Left ventricle myocardium superior (tissue), 1 donor: ENCODE measurements at regions of chr13 and their contacts with region 1.

Region 1: GRCh38 chr13:110412132-110412914 is 105.2 kb downstream of the COL4A2 start:
- DNase-seq: peak; percentile 88
- ATAC-seq: peak; percentile 78

Region 2: DNA sequence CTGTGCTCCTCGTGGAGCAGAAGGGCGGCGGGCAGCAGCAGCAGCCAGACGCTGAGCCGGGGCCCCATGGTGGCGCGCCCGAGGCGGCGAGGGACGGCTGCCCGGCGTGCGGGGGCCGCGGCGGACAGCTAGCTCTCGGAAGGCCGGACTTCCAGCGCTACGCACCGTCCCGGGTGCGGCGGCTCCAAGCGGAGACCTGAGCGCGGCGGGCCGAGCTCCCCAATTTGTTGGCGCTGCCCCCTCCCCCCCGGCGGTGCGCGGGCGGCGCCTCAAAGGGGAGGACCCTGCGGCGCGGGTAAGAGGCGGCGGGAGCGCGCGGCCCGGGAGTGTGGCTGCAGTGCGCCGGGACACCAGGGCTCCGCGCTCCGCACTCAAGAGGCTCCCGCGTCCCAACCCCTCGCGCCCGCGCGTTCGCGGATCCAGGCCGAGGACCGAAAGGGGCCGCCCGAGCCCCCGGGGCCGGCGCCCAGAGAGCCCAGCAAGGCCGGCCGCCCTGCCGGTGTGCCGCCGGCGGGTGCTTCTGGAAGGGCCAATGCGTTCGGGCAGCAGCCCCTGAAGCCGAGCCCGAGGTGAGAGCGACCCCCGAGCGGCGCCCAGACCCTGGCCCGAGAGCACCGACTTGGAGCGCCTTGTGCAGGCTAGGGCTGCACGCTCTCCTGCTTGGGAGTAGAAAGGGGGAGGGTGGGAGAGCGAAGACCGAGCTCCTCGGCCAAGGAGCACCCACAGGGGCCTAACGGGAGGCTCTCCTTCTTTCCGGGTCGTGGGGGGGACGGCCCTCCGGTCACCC is 105.2 kb before region 1 on chr13 and contains the starts of genes COL4A1 and COL4A2:
- intact Hi-C with region 1: loop called (anchors 10 kb)
- DNase-seq: peak; percentile 93
- ATAC-seq: peak; percentile 85
- total RNA-seq, gene COL4A1: 119 TPM
- total RNA-seq, gene COL4A2: 126 TPM

Region 3: DNA sequence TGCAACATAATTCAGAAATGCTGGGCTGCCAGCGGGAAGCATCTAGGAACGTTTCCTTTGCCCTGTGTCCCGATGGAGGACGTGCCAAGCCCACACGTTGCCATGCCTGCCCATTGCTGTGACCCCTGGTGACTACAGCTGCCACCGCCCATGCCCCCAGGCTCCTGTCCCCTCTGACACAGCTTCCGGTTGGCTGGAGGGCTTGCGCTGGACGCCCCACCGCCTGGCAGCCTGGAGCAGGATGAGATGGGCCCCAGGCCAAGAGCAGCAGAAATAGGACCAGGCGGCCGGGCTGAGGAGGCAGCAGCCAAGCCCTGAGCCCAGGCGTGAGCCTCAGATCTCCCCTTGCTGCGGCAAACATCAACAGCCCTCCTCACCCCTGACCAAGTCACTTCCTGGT is 20.7 kb after region 1 on chr13:
- intact Hi-C with region 1: no loop called
- DNase-seq: peak; percentile 73
- ATAC-seq: peak; percentile 75

Region 4: DNA sequence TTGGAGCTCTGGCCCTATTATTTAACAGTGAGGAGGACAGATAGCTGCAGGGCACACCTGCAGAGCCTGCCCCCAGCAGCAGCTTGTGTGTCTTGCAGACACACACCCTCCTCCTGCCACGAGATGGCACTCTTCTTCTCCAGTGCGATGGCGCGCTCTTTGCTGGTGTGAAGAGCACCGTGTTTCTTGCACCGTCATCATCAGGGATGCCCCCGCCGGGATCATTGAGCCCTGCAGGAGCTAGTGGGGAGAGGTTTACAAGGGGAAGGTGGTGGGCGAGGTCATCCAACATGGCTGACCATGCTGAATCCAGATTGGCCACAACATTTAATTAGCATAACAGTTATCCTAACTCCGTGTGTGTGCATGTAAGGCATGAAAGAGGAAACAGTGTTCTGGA is 43.6 kb after region 1 on chr13:
- intact Hi-C with region 1: no loop called
- DNase-seq: peak; percentile 77
- ATAC-seq: peak; percentile 87